Posterior cingulate gyrus (tissue), 11 donors: ENCODE measurements at regions of chr16 and their contacts with region 1.

Region 1: DNA sequence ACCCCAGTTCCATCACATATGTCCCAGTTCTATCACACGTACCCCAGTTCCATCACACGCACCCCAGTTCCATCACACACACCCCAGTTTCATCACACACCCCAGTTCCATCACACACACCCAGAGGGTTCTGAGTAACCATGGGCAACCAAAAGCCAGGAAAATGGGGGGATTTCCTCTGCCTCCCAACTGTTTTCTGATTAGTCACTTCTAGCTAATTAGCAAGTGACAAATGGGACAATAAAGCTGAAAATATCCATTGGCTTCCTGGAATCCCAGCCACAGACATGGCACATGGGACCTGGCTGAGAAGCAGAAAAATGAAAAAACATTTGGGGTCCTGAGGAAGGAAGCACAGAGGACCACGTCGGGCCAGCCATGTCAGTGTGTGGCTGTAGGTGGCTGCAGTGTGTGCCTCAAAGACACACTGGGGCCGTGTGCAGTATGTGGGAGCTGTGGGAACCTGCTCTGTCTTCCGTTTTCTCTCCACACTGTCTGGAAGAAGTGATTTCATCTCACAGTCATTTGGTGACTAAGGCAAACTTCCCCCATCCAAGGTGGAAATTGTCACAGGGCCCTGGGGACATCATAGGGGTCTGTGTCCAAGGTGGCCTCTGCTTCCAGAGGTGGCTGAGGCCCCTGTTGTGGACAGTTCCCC is 106.7 kb downstream of the CMIP start:
- DNase-seq: peak in 1 of 10 donors; percentile 80

Region 2: DNA sequence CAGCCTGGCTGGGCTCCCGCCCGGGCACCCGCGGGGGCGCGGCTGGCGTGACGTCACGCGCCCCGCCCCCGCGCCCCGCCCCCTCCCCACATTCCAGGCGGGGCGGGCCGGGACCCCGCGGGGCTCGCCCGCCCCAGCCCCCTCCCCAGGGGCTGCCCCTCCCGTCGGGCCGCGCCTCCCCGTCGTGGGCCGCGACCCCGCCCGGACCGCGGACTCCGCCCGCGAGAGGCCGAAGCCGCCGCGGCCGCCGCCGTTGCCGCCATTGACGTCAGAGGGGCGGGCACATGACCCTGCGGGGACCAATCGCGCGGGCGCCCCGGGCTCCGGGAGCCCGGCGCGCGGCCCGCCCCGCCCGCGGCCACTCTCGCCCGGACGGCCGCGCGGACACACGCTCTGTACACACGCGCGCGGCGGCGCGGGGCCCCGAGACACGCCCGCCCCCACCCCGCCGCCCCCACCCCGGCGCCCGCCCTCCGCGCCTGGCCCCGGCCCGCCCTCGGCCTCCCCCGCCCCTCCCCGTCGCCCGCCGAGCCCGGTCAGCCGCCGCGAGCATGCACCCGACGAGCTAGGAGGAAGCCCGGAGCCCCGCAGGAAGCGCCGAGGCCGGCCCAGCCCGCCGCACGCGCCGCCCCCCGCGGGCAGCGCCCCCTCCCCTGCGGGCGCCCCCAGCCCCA is 106.7 kb before region 1 on chr16 and contains the start of gene CMIP:
- intact Hi-C with region 1: no loop called
- DNase-seq: peak; percentile 64 to 97 (median 76)

Region 3: GRCh38 chr16:81457326-81458133 is 93.8 kb before region 1 on chr16:
- intact Hi-C with region 1: loop called (anchors 10 kb)
- DNase-seq: no peak

Region 4: GRCh38 chr16:81493755-81494433 is 57.4 kb before region 1 on chr16:
- intact Hi-C with region 1: loop called (anchors 10 kb)
- DNase-seq: peak in 3 of 10 donors; percentile 52 to 85 (median 69)

Region 5: GRCh38 chr16:81863630-81864352 is 312.5 kb after region 1 on chr16:
- intact Hi-C with region 1: loop called (anchors 10 kb)
- DNase-seq: no peak